ENCODE measurements at regions of chr3 and their contacts with region 1.

Region 1: DNA sequence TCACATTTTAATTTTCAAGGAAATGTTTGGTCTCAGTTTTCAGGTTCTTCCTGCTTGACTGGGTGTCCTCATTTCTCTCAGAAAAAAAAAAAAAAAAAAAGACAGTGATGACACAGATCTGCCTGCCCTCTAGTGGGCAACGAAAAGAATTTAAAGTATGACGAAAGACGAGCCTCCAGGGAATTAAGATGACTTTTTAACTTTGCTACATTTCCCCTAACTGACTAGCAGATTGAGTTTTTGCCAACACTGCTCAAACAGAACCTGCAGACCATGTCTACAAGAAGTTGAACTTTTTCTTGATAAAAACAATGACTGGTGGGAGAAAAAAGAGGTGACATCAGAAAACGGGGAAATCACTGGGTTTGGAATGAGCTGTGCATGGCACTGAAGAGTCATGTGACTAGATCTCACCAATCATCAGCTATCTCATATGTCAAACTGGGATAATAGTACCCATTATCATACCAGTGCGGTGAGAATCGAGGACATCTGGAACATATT is 40.8 kb downstream of the EOMES start:
- DNase-seq: peak; percentile 46 to 72
- H3K4me3 ChIP-seq: peak overlapping the region; percentile 15; the same call in 1 of the 2 replicates
- H3K4me1 ChIP-seq: peaks cover 7% of the 10 kb centered on the region
- H3K27me3 ChIP-seq: no peaks in the 10 kb centered on the region

Region 2: GRCh38 chr3:27312044-27312668 is 369.1 kb before region 1 on chr3:
- in situ Hi-C with region 1: loop called (anchors 25 kb)
- DNase-seq: peak; percentile 35 to 72
- H3K4me3 ChIP-seq: no peak overlapping the region
- H3K4me1 ChIP-seq: no peaks in the 10 kb centered on the region
- H3K27me3 ChIP-seq: no peaks in the 10 kb centered on the region

Region 3: GRCh38 chr3:27340534-27340933 is 340.8 kb before region 1 on chr3:
- in situ Hi-C with region 1: no loop called
- DNase-seq: no peak
- H3K4me3 ChIP-seq: no peak overlapping the region
- H3K4me1 ChIP-seq: no peaks in the 10 kb centered on the region
- H3K27me3 ChIP-seq: no peaks in the 10 kb centered on the region